Common myeloid progenitor, CD34-positive (primary cell): ENCODE measurements at regions of chr3 and their contacts with region 1.

Region 1: GRCh38 chr3:192816351-192816750 is 89.0 kb upstream of the FGF12 start:
- DNase-seq: peak; percentile 43 to 64 (median 55)
- H3K4me3 ChIP-seq: no peak overlapping the region
- H3K27ac ChIP-seq: no peak overlapping the region
- H3K4me1 ChIP-seq: no peaks in the 10 kb centered on the region
- H3K27me3 ChIP-seq: peaks cover 0 to 3% (median 0%) of the 10 kb centered on the region in 5 experiments

Region 2: DNA sequence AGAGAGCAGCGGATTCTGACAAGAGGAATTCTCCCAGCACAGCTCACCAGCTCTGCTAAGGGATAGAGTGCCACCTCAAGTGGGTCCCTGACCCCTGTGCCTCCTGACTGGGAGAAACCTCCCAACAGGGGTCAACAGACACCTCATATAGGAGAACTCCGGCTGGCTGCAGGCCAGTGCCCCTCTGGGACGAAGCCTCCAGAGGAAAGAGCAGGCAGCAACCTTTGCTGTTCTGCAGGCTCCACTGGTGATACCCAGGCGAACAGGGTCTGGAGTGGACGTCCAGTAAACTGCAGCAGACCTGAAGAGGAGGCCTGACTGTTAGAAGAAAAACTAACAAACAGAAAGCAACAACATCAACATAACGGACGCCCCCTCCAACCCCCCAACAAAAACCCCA is 57.7 kb before region 1 on chr3:
- CTCF ChIA-PET with region 1: no interaction called
- POLR2A ChIA-PET with region 1: no interaction called
- DNase-seq: no peak
- H3K4me3 ChIP-seq: no peak overlapping the region
- H3K27ac ChIP-seq: no peak overlapping the region
- H3K4me1 ChIP-seq: no peaks in the 10 kb centered on the region
- H3K27me3 ChIP-seq: no peaks in the 10 kb centered on the region

Region 3: DNA sequence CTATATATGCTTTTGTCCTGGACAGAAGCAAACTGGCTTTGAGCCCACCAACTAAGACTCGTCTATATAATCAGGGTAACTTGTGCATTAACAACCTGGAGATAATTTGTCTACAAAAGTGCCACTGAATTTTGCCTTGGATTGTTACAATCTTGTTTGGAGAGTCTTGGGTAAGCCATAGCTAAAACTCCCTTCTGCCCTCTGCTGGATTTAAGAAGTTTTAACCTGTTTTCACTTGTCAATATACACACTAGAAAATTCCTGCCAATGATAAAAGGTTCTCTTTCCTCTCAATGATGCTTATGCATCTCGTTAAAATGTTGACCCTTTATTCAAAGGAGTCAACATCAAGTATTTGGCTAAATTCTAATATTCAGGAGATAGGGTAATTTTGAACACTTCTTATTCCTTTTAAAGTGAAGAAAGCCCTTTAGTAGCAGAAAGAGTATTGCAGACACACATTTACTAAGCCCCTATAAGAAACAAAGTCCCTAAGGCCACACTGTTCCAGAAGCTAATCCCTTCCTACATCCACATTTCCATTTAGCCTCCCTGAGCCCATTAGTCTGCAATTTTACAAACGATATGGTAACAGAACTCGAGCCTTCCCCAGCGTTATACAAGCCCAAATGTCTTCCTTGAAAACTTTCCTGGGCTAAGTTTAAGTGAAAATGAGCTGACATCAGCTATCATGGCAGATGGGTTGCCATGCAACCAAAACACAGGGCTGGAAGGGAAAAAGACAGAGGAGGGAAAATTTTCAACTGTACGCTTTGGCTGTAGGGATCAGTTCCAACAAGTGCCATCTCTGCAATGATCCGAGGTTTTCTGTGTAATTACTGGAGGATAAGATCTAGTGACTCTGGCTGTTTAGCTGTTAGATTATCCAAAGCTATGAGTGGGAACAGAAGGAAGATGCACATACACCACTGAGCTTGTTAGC is 13.1 kb before region 1 on chr3:
- CTCF ChIA-PET with region 1: interaction called, 56 read pairs
- POLR2A ChIA-PET with region 1: no interaction called
- DNase-seq: peak; percentile 54 to 77 (median 70)
- H3K4me3 ChIP-seq: no peak overlapping the region
- H3K27ac ChIP-seq: no peak overlapping the region
- H3K4me1 ChIP-seq: no peaks in the 10 kb centered on the region
- H3K27me3 ChIP-seq: peaks cover 0 to 4% (median 0%) of the 10 kb centered on the region in 5 experiments

Region 4: DNA sequence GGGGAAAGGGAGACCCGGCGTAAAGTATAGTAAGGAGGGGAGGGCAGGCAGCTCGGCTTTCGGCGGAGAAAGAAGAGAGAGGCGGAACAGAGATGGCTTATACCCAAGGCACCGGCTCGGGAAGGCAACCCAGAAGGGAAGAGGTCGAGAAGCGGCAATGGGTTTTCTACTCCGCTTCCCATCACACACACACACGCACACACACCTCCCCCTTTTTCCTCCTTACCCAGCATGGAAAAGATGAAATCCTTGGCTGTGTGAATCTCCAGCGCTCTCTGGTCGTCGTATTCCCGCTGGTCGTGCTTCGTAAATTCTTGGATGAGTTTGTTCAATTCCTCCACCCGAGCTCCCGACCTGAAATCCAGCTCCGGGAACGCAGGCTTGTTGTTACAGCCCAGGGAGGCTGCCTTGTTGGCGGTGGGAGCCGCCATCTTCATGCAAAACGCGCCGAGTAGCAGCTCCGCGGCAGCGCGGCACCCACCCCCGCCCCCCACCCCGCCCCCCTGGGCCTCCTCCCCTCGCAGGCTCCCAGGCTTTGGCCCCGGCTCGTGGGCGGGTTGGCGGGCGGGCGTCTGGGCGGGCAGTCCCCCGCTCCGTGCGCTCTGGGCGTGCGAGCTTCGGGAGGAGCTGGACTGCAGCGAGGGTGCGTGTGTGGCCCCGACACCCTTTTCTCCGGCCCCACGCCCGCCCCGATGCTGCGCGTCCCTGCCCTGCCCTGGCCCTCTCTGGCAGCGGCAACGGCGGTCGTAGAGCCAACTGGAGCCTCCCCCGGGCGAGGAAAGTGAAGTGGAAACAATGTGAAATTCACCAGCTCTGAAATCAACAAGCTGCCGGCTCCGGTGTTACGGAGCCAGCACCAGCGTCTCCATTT is 101.3 kb after region 1 on chr3 and contains the start of gene MB21D2:
- CTCF ChIA-PET with region 1: interaction called, 18 read pairs
- POLR2A ChIA-PET with region 1: interaction called, 11 read pairs
- DNase-seq: peak; percentile 55 to 73 (median 67)
- H3K4me3 ChIP-seq: peak within 1 kb of the TSS; percentile 48 to 90 (median 78)
- H3K27ac ChIP-seq: no peak within 1 kb of the TSS
- H3K4me1 ChIP-seq: peaks cover 3 to 21% (median 19%) of the 10 kb centered on the region in 4 experiments
- H3K27me3 ChIP-seq: peaks cover 29 to 62% (median 33%) of the 10 kb centered on the region in 5 experiments

Region 5: DNA sequence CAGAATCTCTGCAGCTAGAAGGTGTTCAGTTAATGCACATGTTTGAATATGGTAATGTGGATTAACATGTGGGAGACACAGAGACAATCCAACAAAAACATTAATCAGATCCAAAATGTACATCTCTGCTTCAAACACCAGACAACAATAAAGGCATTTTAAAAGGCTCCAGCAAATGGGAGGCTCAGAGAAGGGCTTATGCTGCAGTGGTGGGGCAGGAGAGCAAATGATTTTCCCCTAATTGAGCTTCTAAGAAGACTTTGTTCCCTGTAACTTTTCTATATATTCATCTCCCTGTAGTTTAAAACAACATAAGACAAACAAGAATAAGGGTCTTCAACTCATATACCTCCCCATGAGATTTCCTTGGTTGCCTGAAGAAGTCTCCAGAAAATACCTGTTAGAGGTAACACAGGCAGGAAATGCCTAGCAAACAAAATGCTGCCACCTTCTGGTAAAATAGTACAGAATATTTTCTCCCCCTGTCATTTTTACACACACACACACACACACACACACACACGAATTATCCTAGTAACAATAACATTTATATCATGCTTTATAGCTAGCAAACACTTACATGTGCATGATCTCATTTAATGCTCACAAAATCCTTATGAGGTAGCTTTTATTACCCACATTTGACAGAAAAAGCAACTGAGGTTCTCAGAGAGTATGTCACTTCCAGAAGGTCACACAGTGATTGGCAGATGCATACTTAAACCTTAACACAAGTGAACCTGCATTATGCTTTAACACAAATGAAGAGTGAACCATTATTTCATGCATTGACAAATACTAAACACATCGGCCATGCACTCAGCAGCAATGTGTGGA is 224.7 kb after region 1 on chr3:
- CTCF ChIA-PET with region 1: interaction called, 255 read pairs
- POLR2A ChIA-PET with region 1: no interaction called
- DNase-seq: peak; percentile 36 to 62 (median 54)
- H3K4me3 ChIP-seq: no peak overlapping the region
- H3K27ac ChIP-seq: no peak overlapping the region
- H3K4me1 ChIP-seq: no peaks in the 10 kb centered on the region
- H3K27me3 ChIP-seq: peaks cover 0 to 8% (median 0%) of the 10 kb centered on the region in 5 experiments

Region 6: GRCh38 chr3:193489949-193490348 is 673.6 kb after region 1 on chr3:
- CTCF ChIA-PET with region 1: no interaction called
- POLR2A ChIA-PET with region 1: no interaction called
- DNase-seq: no peak
- H3K4me3 ChIP-seq: no peak overlapping the region
- H3K27ac ChIP-seq: no peak overlapping the region
- H3K4me1 ChIP-seq: no peaks in the 10 kb centered on the region
- H3K27me3 ChIP-seq: peaks cover 0 to 2% (median 0%) of the 10 kb centered on the region in 5 experiments

Region 7: GRCh38 chr3:193572426-193572908 is 756.1 kb after region 1 on chr3:
- CTCF ChIA-PET with region 1: interaction called, 32 read pairs
- POLR2A ChIA-PET with region 1: no interaction called
- DNase-seq: peak; percentile 70 to 81 (median 77)
- H3K4me3 ChIP-seq: no peak overlapping the region
- H3K27ac ChIP-seq: no peak overlapping the region
- H3K4me1 ChIP-seq: peaks cover 0 to 5% (median 2%) of the 10 kb centered on the region in 4 experiments
- H3K27me3 ChIP-seq: peaks cover 0 to 3% (median 0%) of the 10 kb centered on the region in 5 experiments